Body of pancreas (tissue), 4 donors: ENCODE measurements at regions of chr9 and their contacts with region 1.

Region 1: DNA sequence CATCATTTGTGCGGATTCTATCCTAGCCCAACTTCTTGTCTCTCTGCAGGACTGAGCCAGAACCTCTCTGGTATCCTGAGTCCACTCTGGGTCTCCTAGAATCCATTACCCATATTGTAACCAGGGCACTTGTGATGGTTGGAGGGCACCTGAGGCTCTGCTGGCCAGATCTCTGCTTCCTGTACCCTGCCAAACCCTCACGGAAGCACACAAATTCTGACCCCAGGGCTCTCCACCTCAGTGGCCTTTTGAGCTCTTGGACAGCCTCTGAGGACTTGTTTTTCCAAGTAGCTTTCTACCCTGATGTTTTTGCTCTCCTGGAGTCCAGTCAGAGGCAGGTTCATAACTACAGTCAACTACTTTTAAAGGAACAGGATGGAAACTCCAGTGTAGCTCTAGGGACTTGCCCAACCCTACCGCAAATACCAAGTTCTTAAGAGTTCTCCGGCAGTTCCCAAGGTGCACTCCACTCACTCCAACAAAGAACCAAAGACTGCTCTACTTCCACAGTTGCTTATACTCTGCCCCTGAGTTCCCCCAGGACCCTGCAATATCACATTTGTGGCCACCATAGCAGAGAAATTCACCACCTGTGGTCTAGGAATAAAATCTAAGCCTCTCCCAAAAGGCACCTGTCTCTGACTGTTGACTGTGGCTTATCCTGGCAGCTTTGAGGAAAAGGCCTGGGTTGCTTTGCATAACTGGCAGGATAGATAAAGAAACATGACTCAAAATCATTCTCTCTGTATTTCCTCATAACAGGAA is 9.6 kb downstream of the PIP5K1B start:
- DNase-seq: peak in 2 of 4 donors; percentile 12 to 39
- ATAC-seq: peak; percentile 69
- H3K4me3 ChIP-seq: no peak overlapping the region
- H3K27ac ChIP-seq: no peak overlapping the region
- H3K4me1 ChIP-seq: peaks cover 5% of the 10 kb centered on the region
- H3K27me3 ChIP-seq: no peaks in the 10 kb centered on the region
- CTCF ChIP-seq: no peak
- POLR2A ChIP-seq: no peak

Region 2: DNA sequence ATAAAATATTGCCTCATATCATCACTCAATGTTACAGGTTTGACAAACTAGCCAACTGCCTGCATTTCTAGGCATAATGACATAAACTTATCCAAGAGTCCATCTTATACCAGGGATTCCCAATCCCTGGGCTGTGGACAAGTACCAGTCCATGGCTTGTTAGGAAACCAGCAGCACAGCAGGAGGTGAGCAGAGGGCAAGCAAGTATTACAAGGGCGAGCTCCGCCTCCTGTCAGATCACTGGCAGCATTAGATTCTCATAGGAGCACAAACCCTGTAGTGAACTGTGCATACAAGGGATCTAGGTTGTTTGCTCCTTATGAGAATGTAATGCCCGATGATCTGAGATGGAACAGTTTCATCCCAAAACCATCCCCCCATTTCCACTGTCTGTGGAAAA is 154.4 kb after region 1 on chr9:
- intact Hi-C with region 1: loop called (anchors 5 kb)
- DNase-seq: peak in 1 of 4 donors; percentile 11
- ATAC-seq: no peak
- H3K4me3 ChIP-seq: no peak overlapping the region
- H3K27ac ChIP-seq: no peak overlapping the region
- H3K4me1 ChIP-seq: peaks cover 21% of the 10 kb centered on the region
- H3K27me3 ChIP-seq: no peaks in the 10 kb centered on the region
- CTCF ChIP-seq: no peak
- POLR2A ChIP-seq: no peak